ENCODE measurements at regions of chrX and their contacts with region 1.

Region 1: GRCh38 chrX:118726887-118727739 is at the start of gene IL13RA1:
- DNase-seq: peak; percentile 88
- H3K4me3 Mint-ChIP-seq: peak within 1 kb of the TSS; percentile 82
- H3K27ac Mint-ChIP-seq: peak within 1 kb of the TSS; percentile 94
- H3K4me1 Mint-ChIP-seq: peaks cover 55% of the 10 kb centered on the region
- H3K27me3 Mint-ChIP-seq: no peaks in the 10 kb centered on the region
- CTCF ChIP-seq: no peak
- total RNA-seq, gene IL13RA1: 60.4 and 67.8 TPM in 2 replicates

Region 2: GRCh38 chrX:117839544-117839943 is 887.6 kb before region 1 on chrX:
- CTCF ChIA-PET with region 1: no interaction called
- intact Hi-C with region 1: no loop called
- DNase-seq: no peak
- H3K4me3 Mint-ChIP-seq: no peak overlapping the region
- H3K27ac Mint-ChIP-seq: no peak overlapping the region
- H3K4me1 Mint-ChIP-seq: no peaks in the 10 kb centered on the region
- H3K27me3 Mint-ChIP-seq: no peaks in the 10 kb centered on the region
- CTCF ChIP-seq: no peak

Region 3: DNA sequence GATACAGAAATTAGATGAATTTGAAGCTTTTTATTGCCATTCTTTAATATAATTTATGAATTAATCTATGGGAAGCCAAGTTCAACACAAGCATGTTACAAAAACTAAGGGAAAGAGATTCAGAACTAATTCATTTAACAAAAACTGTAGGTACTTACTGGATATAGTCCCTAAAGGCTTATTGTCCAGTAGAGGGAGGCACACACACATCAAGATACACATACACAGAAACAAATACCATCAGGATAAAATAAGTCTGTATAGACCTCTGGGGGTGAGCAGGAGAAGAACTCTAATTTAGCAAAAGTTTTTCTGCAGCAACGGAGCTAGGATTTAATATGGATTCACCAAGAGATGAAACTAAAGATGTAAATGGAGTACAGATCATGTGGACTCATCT is 82.7 kb before region 1 on chrX:
- CTCF ChIA-PET with region 1: interaction called, 5 read pairs
- intact Hi-C with region 1: loop called (anchors 5 kb)
- DNase-seq: peak; percentile 15
- H3K4me3 Mint-ChIP-seq: no peak overlapping the region
- H3K27ac Mint-ChIP-seq: no peak overlapping the region
- H3K4me1 Mint-ChIP-seq: peaks cover 7% of the 10 kb centered on the region
- H3K27me3 Mint-ChIP-seq: no peaks in the 10 kb centered on the region
- CTCF ChIP-seq: no peak

Region 4: GRCh38 chrX:118666548-118666947 is 60.6 kb before region 1 on chrX:
- CTCF ChIA-PET with region 1: no interaction called
- intact Hi-C with region 1: loop called (anchors 10 kb)
- DNase-seq: no peak
- H3K4me3 Mint-ChIP-seq: no peak overlapping the region
- H3K27ac Mint-ChIP-seq: no peak overlapping the region
- H3K4me1 Mint-ChIP-seq: peaks cover 8% of the 10 kb centered on the region
- H3K27me3 Mint-ChIP-seq: no peaks in the 10 kb centered on the region
- CTCF ChIP-seq: no peak

Region 5: GRCh38 chrX:119638725-119639471 is 911.8 kb after region 1 on chrX:
- CTCF ChIA-PET with region 1: no interaction called
- intact Hi-C with region 1: no loop called
- DNase-seq: no peak
- H3K4me3 Mint-ChIP-seq: no peak overlapping the region
- H3K27ac Mint-ChIP-seq: no peak overlapping the region
- H3K4me1 Mint-ChIP-seq: no peaks in the 10 kb centered on the region
- H3K27me3 Mint-ChIP-seq: peaks cover 37% of the 10 kb centered on the region
- CTCF ChIP-seq: no peak